OCI-LY7 (cell line): ENCODE measurements at regions of chr6 and their contacts with region 1.

Region 1: DNA sequence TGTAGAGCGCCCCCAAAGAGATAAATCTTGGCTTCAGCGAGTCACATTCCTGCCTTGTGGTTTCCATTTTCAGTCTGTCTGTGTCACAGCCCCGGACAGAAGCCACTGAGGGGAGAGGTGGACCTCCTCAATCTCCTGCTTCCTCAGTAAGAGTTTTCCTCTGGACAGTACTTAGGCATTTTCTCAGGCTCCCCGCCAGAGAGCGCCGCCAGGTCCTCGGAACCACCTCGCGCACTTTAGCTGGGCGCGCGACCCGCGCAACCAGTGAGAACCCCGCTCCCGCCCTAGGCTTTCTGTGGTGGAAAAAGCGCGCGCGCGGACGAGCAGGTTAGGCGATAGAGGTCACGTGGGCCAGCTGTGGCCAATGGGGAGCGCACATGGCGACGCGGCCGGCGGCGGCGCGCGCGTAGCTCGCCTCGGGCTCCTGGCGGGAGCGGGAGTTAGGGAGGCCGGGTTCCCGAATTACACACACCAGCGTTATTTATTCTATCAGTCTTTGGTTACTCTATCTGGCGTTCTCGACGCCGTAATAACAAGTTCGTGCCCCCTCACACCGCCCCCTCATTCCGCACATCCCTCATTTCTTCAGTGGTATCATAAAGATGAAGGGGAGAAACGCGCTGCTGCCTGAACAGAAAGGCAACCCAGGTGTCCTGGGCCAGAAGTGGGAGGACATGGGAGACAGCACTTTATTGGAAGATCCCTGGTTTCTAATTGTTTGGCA is 19.4 kb downstream of the PXT1 start:
- DNase-seq: peak; percentile 99
- H3K4me3 ChIP-seq: peak overlapping the region; percentile 68
- H3K27ac ChIP-seq: peak overlapping the region; percentile 45
- H3K4me1 ChIP-seq: peaks cover 13% of the 10 kb centered on the region
- CTCF ChIP-seq: peak; percentile 85

Region 2: DNA sequence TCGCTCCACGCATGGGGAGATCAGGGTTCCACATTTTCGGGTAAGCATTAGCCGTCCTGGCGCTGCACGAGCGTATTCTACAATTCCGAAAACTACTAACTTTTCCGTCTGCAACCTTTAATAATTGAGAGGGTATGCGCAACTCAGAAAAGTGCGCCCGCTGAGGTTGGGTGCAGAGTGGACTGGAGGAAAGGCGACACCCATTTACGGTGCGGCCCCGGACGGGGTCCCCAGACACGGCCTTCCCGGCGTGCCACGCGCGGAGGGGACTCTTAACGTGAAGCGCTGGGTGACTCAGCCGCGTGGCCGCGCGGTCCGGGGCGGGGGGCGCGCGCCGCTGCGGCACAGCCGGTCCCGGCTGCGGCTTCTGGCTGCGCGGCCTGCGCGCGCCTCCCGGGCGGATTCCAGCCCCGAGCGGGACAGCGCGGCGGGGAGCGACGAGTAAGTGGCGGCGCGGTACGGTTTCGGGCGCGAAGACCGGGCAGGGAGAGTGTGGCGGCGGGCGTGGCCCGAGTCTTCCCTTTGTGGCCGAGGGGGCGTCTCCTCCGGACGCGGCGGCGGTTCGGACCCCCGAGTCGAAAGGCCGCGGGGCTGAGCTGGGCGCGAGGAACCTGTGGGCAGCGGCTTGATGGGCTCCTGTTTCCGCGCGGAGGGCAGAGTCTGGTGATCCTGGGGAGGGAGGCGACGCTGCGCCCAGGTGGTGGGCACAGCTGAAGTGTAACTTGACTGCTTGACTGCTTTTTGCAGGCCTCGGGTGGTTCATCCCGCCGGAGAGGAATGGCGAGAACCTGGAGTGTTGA is 19.6 kb after region 1 on chr6 and contains the starts of genes KCTD20 and PXT1:
- CTCF ChIA-PET with region 1: no interaction called
- POLR2A ChIA-PET with region 1: interaction called, 6 read pairs
- intact Hi-C with region 1: loop called (anchors 1 kb)
- DNase-seq: peak; percentile 95
- H3K4me3 ChIP-seq: peak within 1 kb of the TSS; percentile 96
- H3K27ac ChIP-seq: peak within 1 kb of the TSS; percentile 85
- H3K4me1 ChIP-seq: peaks cover 33% of the 10 kb centered on the region
- CTCF ChIP-seq: peak; percentile 37; the same call in 1 of the 2 replicates
- total RNA-seq, gene KCTD20: 73.6 and 74.8 TPM in 2 replicates
- total RNA-seq, gene PXT1: 0.15 TPM in 1 of 2 replicates, not detected in the other

Region 3: DNA sequence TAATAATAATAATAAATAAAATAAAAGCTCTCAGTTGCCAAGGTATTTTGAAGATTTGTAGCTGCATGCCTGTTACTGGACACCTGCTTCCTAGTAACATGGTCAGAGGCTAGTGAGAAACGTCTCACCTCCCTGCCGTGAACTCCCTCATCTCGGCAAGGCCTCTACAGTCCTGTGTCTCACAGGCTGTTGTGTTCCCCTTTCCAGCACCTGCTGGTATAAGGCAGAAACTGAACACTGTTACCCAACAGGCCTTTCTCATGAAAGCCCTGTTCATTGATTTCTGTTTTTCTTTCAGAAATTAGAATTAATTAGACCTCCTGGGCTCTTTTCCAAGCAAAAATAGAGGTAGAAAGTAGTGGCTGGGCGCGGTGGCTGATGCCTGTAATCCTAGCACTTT is 153.3 kb after region 1 on chr6:
- CTCF ChIA-PET with region 1: no interaction called
- POLR2A ChIA-PET with region 1: interaction called, 4 read pairs
- intact Hi-C with region 1: loop called (anchors 5 kb)
- DNase-seq: peak; percentile 59
- H3K4me3 ChIP-seq: no peak overlapping the region
- H3K27ac ChIP-seq: no peak overlapping the region
- H3K4me1 ChIP-seq: peaks cover 28% of the 10 kb centered on the region
- CTCF ChIP-seq: no peak